ENCODE measurements at regions of chr17 and their contacts with region 1.

Region 1: GRCh38 chr17:59004338-59005111 is 102.2 kb downstream of the TRIM37 start:
- DNase-seq: peak in 5 of 10 donors; percentile 27 to 69 (median 58)

Region 2: GRCh38 chr17:58587702-58588254 is 416.7 kb before region 1 on chr17:
- intact Hi-C with region 1: loop called (anchors 2 kb)
- DNase-seq: peak in 7 of 10 donors; percentile 11 to 89 (median 58)

Region 3: DNA sequence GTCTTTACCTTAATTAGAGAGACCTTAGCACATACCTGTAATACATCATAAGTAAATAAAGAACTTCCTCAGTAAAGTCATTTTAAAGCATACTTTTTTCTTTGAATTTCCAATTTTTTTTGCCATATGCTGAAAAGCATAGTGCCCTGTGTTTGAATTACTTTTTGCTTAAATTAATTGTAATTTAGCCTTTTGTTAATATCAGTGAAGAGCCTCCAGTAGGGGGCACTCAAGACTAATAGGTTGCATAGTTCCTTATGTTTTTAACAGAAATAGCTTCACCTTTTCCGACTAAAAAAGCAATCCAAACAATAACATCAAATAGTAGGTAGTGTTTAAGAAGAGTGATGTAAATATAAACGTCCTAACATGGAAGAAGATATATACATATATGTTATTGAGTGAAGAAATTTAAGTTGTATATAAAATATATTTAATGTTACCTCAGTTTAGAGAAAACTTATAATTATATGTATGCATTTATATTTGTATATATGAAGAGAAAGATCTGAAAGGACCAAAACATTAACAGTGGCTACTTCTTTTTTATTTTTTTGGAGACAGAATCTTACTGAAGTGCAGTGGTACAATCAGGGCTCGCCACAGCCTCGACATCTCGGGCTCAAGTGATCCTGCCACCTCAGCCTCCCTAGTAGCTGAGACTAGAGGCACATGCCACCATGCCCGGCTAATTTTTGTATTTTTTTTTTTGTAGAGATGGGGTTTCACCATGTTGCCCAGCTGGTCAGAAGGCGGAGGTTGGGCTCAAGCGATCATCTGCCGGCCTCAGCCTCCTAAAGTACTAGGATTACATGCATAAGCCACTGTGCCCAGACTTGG is 293.4 kb before region 1 on chr17:
- intact Hi-C with region 1: loop called (anchors 1 kb)
- DNase-seq: peak in 1 of 10 donors; percentile 18